ENCODE measurements at regions of chr6 and their contacts with region 1.

Region 1: GRCh38 chr6:68651011-68651985 is 16.2 kb downstream of the ADGRB3 start:
- DNase-seq: no peak
- H3K4me3 ChIP-seq: peak overlapping the region in 49 of 59 donors; percentile 0 to 52 (median 20)
- H3K27ac ChIP-seq: peak overlapping the region in 52 of 59 donors; percentile 3 to 81 (median 53)
- H3K27me3 ChIP-seq: no peaks in the 10 kb centered on the region
- CTCF ChIP-seq: peak in 2 of 56 donors; percentile 4 to 6

Region 2: DNA sequence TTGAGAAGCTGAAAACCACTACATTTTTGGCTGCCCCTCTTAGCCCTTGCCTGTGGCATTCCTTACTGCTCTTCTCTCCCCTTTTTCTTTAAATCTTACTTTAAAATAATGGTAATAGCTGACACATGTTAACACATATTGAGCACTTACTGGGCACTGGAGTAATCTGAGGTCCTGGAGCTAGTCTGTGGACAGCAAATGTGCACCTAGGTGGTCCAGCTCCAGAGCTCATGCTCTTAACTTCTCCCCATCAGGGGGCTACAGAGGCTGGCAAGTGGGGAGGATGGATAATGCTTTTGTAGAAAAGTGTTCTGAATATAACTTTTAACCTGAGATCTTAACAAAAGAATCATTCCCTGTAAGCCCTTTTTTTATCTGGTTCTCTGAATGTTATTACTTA is 58.6 kb after region 1 on chr6:
- intact Hi-C with region 1: loop called in 1 of 2 experiments (anchors 5 kb)
- DNase-seq: no peak
- H3K4me3 ChIP-seq: peak overlapping the region in 49 of 59 donors; percentile 1 to 53 (median 26)
- H3K27ac ChIP-seq: peak overlapping the region; percentile 25 to 90 (median 79)
- H3K27me3 ChIP-seq: no peaks in the 10 kb centered on the region
- CTCF ChIP-seq: no peak